Heart right ventricle (tissue), 16 donors: ENCODE measurements at regions of chrX and their contacts with region 1.

Region 1: GRCh38 chrX:17374619-17375366 is at the start of gene NHS:
- DNase-seq: peak; percentile 56 to 63
- ATAC-seq: peak; percentile 77 to 92 (median 90)
- H3K4me3 ChIP-seq: peak within 1 kb of the TSS; percentile 18 to 60 (median 58)
- H3K27ac ChIP-seq: peak within 1 kb of the TSS in 5 of 10 donors; percentile 15 to 39 (median 31)
- H3K4me1 ChIP-seq: peaks cover 0 to 7% (median 0%) of the 10 kb centered on the region in 9 donors
- H3K27me3 ChIP-seq: peaks cover 0 to 70% (median 0%) of the 10 kb centered on the region in 7 donors
- CTCF ChIP-seq: peak; percentile 20 to 59 (median 44)
- total RNA-seq, gene NHS: 0.78 to 2.7 (median 1.3) TPM

Region 2: DNA sequence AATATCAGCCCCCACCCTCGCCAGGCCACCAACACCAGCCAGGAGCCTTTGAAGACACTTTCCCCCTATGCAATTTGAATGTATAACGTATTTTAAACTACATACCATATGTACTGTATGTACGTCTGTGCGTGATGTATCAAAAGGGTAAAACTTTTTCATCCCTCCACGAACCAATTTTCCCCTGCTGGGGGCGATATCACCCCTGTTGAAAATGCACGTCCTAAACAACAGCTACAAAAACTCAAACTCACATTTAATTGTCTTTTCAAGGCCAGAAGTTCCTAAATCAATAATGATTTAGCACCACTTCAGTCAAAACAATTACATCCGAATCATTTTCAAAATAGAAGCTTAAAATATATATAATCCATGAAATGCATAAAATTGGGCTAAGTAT is 1992.0 kb before region 1 on chrX:
- intact Hi-C with region 1: no loop called
- DNase-seq: no peak
- ATAC-seq: no peak
- H3K4me3 ChIP-seq: peak overlapping the region in 2 of 10 donors; percentile 7 to 20
- H3K27ac ChIP-seq: no peak overlapping the region
- H3K4me1 ChIP-seq: no peaks in the 10 kb centered on the region
- H3K27me3 ChIP-seq: peaks cover 0 to 57% (median 0%) of the 10 kb centered on the region in 7 donors
- CTCF ChIP-seq: peak in 5 of 9 donors; percentile 5 to 15 (median 11)

Region 3: DNA sequence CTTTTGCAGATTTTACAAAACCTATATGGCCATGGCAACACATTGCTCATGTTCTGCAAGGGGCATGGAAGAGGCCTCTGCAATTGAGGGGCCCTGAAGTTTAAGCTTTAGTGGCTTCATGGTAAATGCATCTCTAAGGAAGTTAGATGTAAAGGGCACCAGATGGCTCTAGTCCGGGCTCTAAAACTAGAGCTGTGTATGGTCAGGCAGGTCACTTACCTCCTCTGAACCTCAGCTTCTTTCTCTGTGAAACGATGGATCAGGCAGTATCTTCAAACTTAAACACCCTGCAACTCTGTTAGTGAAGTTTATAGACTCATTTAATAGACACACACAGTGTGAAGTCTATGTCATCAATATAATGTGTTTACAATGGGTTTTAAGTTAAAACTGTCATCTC is 1197.5 kb before region 1 on chrX:
- intact Hi-C with region 1: no loop called
- DNase-seq: no peak
- ATAC-seq: no peak
- H3K4me3 ChIP-seq: no peak overlapping the region
- H3K27ac ChIP-seq: no peak overlapping the region
- H3K4me1 ChIP-seq: no peaks in the 10 kb centered on the region
- H3K27me3 ChIP-seq: peaks cover 0 to 14% (median 0%) of the 10 kb centered on the region in 7 donors
- CTCF ChIP-seq: no peak

Region 4: DNA sequence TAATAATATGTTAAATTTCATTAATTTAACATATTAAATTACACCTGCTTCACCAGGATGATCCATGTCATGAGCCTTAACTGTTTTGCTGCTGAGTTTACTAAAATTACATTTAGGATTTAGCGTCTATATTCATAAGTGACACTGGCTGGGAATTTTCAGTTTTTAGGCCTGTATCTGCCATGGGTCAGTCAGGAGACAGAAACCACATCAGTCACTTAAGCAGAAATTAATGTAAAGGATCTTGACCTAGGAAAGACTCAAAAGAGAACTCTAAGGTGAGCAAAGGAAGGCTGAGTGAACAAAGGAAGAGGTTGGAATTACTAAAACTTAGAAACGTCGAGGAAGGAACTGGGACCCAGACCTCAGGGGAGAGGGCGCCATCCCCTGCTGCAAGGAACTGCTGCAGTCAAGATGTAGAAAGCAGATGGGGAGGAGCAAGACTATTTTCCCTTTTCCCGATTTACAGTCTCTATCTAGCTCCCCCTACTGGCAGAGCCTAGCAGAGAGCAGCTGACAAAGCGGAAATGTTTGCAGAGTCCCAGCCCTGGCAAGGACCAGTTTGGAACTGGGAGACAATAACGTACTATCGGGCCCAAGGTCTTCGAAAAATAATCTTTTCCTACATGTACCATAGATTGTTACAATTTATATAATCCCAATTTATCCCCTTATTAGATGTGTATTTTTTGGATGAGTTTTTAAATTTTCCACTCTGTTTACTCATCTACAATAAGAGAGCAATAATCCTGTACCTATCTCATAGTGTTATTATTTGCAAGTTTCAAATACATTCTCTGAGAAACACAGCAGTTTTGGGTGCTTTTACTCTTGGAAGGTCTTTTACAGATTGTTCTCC is 482.1 kb before region 1 on chrX:
- intact Hi-C with region 1: no loop called
- DNase-seq: peak; percentile 18 to 72
- ATAC-seq: peak in 7 of 8 donors; percentile 69 to 85 (median 79)
- H3K4me3 ChIP-seq: no peak overlapping the region
- H3K27ac ChIP-seq: no peak overlapping the region
- H3K4me1 ChIP-seq: peaks cover 0 to 4% (median 0%) of the 10 kb centered on the region in 9 donors
- H3K27me3 ChIP-seq: peaks cover 0 to 87% (median 0%) of the 10 kb centered on the region in 7 donors
- CTCF ChIP-seq: peak; percentile 41 to 88 (median 77)

Region 5: GRCh38 chrX:17242470-17242869 is 132.3 kb before region 1 on chrX:
- intact Hi-C with region 1: loop called in 4 of 10 experiments (anchors 10 kb)
- DNase-seq: peak in 1 of 2 donors; percentile 28
- ATAC-seq: peak in 2 of 8 donors; percentile 47 to 60
- H3K4me3 ChIP-seq: no peak overlapping the region
- H3K27ac ChIP-seq: no peak overlapping the region
- H3K4me1 ChIP-seq: no peaks in the 10 kb centered on the region
- H3K27me3 ChIP-seq: peaks cover 0 to 16% (median 0%) of the 10 kb centered on the region in 7 donors
- CTCF ChIP-seq: peak; percentile 43 to 82 (median 70)

Region 6: GRCh38 chrX:17521871-17522693 is 147.3 kb after region 1 on chrX:
- intact Hi-C with region 1: loop called in 3 of 10 experiments (anchors 5 to 10 kb)
- DNase-seq: peak; percentile 15 to 16
- ATAC-seq: peak in 2 of 8 donors; percentile 32 to 55
- H3K4me3 ChIP-seq: no peak overlapping the region
- H3K27ac ChIP-seq: no peak overlapping the region
- H3K4me1 ChIP-seq: peaks cover 0 to 5% (median under 1%) of the 10 kb centered on the region in 9 donors
- H3K27me3 ChIP-seq: no peaks in the 10 kb centered on the region
- CTCF ChIP-seq: no peak

Region 7: DNA sequence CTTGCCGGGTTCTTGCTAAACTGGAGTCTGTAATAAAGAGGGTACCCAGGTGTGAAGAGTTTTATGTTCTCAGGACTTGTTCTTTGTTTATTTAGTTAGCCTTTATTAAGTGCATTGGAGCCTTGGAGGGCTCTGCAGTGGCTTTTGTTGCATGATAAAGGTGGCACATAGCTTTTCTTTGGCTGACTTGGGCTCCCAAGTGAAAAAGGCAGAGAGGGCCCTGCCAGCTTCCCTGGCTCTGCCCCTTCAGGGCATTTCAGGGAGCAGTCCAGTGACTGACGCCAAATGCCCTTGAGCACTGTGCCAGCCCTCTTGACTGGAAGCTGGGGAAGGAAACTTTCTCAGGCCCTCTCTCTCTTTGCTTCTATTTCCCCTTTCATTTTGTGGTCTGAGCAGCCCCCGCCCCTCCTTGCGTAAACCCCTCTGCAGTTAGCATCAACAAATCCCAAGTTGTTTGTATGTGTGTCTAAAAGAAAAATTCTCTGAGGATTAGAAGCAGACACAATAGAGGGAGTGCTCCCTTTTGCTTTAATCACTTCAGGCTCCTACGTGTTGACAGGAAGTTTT is 152.4 kb after region 1 on chrX:
- intact Hi-C with region 1: loop called in 3 of 10 experiments (anchors 5 to 10 kb)
- DNase-seq: peak; percentile 44 to 58
- ATAC-seq: peak; percentile 78 to 93 (median 89)
- H3K4me3 ChIP-seq: no peak overlapping the region
- H3K27ac ChIP-seq: peak overlapping the region in 8 of 10 donors; percentile 15 to 82 (median 58)
- H3K4me1 ChIP-seq: peaks cover 0 to 25% (median 4%) of the 10 kb centered on the region in 9 donors
- H3K27me3 ChIP-seq: no peaks in the 10 kb centered on the region
- CTCF ChIP-seq: no peak

Region 8: DNA sequence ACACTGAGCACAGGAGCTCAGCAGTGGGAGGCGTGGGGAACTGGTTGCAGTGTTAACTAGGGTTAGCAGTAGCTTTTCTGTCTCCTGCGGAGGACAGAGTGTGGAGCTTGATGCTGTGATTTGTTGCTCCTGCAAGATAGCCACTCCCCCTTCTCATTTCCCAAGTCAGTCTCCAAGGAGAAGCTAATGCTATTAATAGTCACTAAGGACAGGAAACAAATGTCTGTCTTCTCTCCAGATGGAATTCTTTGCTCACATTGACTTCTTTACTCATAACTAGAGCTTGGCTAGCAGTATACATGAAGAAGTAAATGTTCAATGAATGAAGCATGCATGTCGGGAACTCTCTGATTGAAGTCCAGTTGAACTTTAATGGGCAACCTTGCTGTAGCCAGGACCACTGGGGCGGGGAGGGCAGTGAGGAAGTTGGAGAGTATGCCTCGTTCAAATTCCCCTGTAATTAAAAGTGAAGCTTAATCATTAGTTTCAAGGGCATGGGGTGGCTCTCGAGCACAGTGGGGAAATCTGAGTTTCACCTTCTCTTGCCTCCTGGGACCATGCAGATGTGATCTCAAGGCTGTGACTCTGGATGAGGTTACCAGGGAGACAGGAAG is 205.9 kb after region 1 on chrX:
- intact Hi-C with region 1: loop called in 2 of 10 experiments (anchors 10 kb)
- DNase-seq: peak in 1 of 2 donors; percentile 21
- ATAC-seq: peak in 7 of 8 donors; percentile 84 to 94 (median 89)
- H3K4me3 ChIP-seq: no peak overlapping the region
- H3K27ac ChIP-seq: peak overlapping the region in 3 of 10 donors; percentile 35 to 48 (median 39)
- H3K4me1 ChIP-seq: peaks cover 0 to 25% (median 9%) of the 10 kb centered on the region in 9 donors
- H3K27me3 ChIP-seq: peaks cover 0 to 15% (median 0%) of the 10 kb centered on the region in 7 donors
- CTCF ChIP-seq: no peak

Region 9: DNA sequence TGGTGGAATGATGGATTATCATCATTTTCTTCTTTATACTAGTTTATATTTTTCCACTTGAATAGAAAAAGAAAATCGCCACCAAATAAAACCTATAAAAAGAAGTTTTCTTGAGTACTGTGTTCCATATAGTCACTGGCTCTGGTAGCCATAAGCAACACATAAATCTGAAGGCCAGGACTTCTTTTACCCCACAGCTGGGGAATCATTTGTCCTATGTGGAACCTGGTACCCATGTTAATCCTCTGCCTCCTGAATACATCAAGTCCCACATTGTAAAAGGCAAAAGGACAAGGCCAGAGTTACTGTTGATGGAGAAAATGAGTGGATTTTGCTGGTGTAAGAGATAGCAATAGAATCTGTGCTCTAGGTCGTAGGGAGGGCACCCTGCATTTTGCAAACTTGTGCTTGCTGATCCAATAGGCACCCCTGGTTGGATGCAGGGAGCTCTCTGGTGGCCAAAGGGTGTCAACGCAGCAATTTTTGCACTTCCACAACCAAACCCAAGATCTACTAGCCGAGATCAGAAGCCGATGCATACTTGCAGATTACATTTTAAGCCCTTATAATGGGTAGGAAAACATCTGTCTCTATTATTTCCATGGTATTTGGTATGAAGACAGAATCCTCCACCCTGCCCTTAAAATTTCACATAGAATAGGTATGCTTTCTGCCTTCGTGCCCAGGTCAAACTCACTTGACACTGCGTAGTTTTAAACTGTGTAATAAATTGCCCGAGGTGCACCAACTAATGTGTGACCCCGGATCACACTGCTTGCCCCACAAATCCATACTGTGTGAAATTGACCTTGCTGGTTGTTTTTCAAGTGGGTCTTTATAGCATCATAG is 216.3 kb after region 1 on chrX:
- intact Hi-C with region 1: loop called in 7 of 10 experiments (anchors 5 to 10 kb)
- DNase-seq: peak; percentile 27 to 51
- ATAC-seq: peak; percentile 67 to 98 (median 88)
- H3K4me3 ChIP-seq: peak overlapping the region in 3 of 10 donors; percentile 10 to 24 (median 22)
- H3K27ac ChIP-seq: peak overlapping the region in 2 of 10 donors; percentile 15 to 25
- H3K4me1 ChIP-seq: peaks cover 0 to 19% (median 0%) of the 10 kb centered on the region in 9 donors
- H3K27me3 ChIP-seq: peaks cover 0 to 8% (median 0%) of the 10 kb centered on the region in 7 donors
- CTCF ChIP-seq: peak; percentile 52 to 76 (median 66)